ENCODE measurements at regions of chr17 and their contacts with region 1.

Region 1: DNA sequence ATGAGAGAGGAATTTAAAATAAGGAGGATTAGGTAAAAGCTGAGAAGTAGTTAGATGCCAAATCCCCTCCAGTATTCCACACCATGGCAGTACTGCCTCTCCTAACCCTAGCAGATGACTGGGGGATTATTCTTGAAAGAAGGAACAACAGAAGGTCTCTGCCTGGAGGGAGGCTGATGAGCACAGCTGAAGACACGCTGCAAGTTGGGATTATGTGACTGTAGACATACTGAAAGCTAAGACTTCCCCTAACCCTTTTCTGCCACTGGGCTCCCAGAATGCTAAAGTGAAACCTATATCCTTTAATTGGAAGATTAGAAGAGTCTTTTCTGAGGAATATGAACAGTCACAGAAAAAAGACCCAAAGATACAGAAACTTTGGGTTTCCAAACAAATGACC is 27.7 kb upstream of the SLC46A1 start:
- DNase-seq: no peak
- H3K4me3 Mint-ChIP-seq: no peak overlapping the region
- H3K27ac Mint-ChIP-seq: no peak overlapping the region
- H3K4me1 Mint-ChIP-seq: peaks cover 10% of the 10 kb centered on the region
- H3K27me3 Mint-ChIP-seq: no peaks in the 10 kb centered on the region
- CTCF ChIP-seq: no peak

Region 2: DNA sequence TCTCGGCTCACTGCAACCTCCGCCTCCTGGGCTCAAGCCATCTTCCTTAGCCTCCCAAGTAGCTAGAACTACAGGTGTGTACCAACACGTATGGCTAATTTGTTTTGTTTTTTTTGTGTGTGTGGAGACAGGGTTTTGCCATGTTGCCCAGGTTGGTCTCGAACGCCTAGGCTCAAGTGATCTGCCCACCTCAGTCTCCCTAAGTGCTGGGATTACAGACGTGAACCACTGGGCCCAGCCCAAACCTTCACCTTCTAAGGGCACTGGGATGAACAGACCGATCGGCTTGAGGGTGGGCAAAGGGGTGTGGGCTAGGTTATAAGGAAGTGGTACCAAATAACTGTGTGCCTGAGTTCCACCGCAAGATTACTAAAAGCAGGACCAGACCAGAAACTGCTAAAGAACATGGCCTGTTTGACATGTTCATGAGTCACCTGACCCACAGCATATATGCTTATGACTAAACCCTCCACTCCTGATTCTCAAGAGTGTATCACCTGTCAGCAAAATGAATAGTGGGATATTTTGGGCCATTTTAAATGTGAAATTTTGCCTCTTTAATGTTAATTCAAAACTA is 106.6 kb before region 1 on chr17:
- CTCF ChIA-PET with region 1: no interaction called
- POLR2A ChIA-PET with region 1: no interaction called
- intact Hi-C with region 1: no loop called
- DNase-seq: no peak
- H3K4me3 Mint-ChIP-seq: no peak overlapping the region
- H3K27ac Mint-ChIP-seq: no peak overlapping the region
- H3K4me1 Mint-ChIP-seq: peaks cover 9% of the 10 kb centered on the region
- H3K27me3 Mint-ChIP-seq: no peaks in the 10 kb centered on the region
- CTCF ChIP-seq: no peak

Region 3: GRCh38 chr17:28446728-28447395 is 13.1 kb after region 1 on chr17:
- CTCF ChIA-PET with region 1: interaction called, 4 read pairs
- POLR2A ChIA-PET with region 1: interaction called, 19 read pairs
- intact Hi-C with region 1: no loop called
- DNase-seq: peak; percentile 72
- H3K4me3 Mint-ChIP-seq: no peak overlapping the region
- H3K27ac Mint-ChIP-seq: no peak overlapping the region
- H3K4me1 Mint-ChIP-seq: no peaks in the 10 kb centered on the region
- H3K27me3 Mint-ChIP-seq: no peaks in the 10 kb centered on the region
- CTCF ChIP-seq: no peak

Region 4: GRCh38 chr17:28571255-28572122 is 137.8 kb after region 1 on chr17 and contains the start of gene PIGS:
- CTCF ChIA-PET with region 1: no interaction called
- POLR2A ChIA-PET with region 1: no interaction called
- intact Hi-C with region 1: no loop called
- DNase-seq: peak; percentile 91
- H3K4me3 Mint-ChIP-seq: peak within 1 kb of the TSS; percentile 93
- H3K27ac Mint-ChIP-seq: peak within 1 kb of the TSS; percentile 85
- H3K4me1 Mint-ChIP-seq: peaks cover 24% of the 10 kb centered on the region
- H3K27me3 Mint-ChIP-seq: no peaks in the 10 kb centered on the region
- CTCF ChIP-seq: no peak
- total RNA-seq, gene PIGS: 50.5 and 56.1 TPM in 2 replicates

Measured in MCF 10A (cell line).